ENCODE measurements at regions of chr18 and their contacts with region 1.

Region 1: DNA sequence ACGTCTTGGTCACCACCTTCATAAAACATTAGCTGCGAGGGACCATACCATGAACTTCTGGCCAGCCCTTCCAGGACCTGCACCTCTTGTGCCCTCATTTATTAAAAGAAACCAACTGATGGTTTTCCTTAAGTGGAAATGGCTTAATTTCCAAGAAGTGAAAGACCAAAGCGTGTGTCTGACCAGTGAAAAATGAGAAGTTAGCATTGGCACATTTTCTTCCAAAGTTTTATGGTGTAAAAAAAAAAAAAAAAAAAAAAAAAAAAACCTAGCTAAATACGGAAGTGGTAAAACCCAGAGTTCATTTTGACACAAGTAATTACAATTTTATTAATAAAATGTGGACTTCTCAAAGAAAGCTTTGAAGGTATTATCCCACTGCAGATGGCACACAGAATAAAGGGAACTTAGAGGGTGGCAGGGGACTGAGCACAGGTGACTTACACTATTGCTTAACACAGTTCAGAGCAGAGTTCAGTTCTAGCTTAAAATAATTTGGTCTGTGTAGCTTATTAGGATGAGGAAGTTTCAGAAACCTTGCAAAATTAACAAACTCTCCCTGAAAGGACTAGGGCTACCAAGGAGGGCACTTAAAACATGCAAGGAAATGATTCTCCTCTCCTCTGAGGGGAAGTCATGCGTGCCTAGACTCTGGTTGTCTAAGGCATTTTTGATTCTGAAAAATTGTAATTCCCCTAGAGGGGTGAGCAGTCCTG is 42.2 kb upstream of the EPG5 start:
- DNase-seq: no peak
- ATAC-seq: no peak
- H3K4me3 ChIP-seq: no peak overlapping the region
- H3K27ac ChIP-seq: no peak overlapping the region
- H3K4me1 ChIP-seq: no peaks in the 10 kb centered on the region
- H3K27me3 ChIP-seq: no peaks in the 10 kb centered on the region
- CTCF ChIP-seq: no peak
- POLR2A ChIP-seq: no peak
- RAD21 ChIP-seq: no peak

Region 2: GRCh38 chr18:45775241-45775676 is 234.0 kb before region 1 on chr18:
- CTCF ChIA-PET with region 1: no interaction called
- POLR2A ChIA-PET with region 1: no interaction called
- dilution Hi-C with region 1: no loop called
- in situ Hi-C with region 1: no loop called
- intact Hi-C with region 1: no loop called
- DNase-seq: peak; percentile 63
- ATAC-seq: peak; percentile 16
- H3K4me3 ChIP-seq: peak overlapping the region; percentile 52
- H3K27ac ChIP-seq: peak overlapping the region; percentile 80
- H3K4me1 ChIP-seq: peaks cover 20% of the 10 kb centered on the region
- H3K27me3 ChIP-seq: no peaks in the 10 kb centered on the region
- CTCF ChIP-seq: no peak
- POLR2A ChIP-seq: no peak
- RAD21 ChIP-seq: no peak

Region 3: DNA sequence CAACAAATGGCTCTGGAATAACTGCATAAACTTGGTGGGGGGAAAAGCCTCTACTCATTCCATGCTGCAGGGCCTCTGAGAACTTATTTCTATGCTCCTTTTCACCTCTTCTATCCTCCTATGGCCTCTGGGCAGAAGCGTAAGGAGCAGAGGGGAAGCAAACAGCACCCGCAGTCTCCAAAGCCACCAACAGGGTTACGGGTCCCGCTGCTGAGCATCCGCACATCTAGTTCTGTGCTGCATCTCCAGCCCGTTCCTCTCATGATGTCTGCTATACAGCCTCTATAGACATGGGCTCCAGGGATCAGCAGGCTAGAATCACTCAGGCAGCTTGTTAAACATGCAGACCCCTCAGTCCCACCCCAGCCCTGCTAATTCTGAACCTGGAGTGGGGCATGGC is 36.8 kb after region 1 on chr18:
- CTCF ChIA-PET with region 1: no interaction called
- POLR2A ChIA-PET with region 1: no interaction called
- dilution Hi-C with region 1: no loop called
- in situ Hi-C with region 1: no loop called
- intact Hi-C with region 1: loop called (anchors 5 kb)
- DNase-seq: no peak
- ATAC-seq: no peak
- H3K4me3 ChIP-seq: no peak overlapping the region
- H3K27ac ChIP-seq: no peak overlapping the region
- H3K4me1 ChIP-seq: peaks cover 3% of the 10 kb centered on the region
- H3K27me3 ChIP-seq: no peaks in the 10 kb centered on the region
- CTCF ChIP-seq: no peak
- POLR2A ChIP-seq: no peak
- RAD21 ChIP-seq: no peak